ENCODE measurements at regions of chr5 and their contacts with region 1.

Region 1: DNA sequence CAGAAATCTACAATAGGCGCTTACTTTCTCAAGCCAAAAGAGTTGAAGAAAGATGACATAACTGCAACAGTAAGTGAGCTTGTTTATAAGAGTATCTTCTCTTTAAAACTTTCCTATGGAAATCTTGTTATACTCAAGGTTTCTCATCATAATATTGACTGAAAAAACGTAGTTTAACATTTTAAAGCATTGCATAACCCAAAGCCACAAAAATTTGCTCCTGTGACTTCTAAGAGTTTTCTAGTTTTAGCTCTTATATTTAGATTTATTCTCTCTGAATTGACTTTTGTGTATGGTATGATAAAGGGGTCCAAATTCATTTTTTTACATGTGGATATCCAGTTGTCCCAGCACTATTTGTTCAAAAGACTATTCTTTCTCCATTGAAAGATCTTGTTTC is 15.2 kb downstream of the WDR36 start:
- DNase-seq: no peak
- ATAC-seq: no peak
- H3K4me3 ChIP-seq: no peak overlapping the region
- H3K27ac ChIP-seq: no peak overlapping the region
- H3K4me1 ChIP-seq: no peaks in the 10 kb centered on the region
- H3K27me3 ChIP-seq: no peaks in the 10 kb centered on the region
- CTCF ChIP-seq: no peak

Region 2: GRCh38 chr5:109830955-109831502 is 1276.3 kb before region 1 on chr5:
- intact Hi-C with region 1: loop called in 1 of 2 experiments (anchors 10 kb)
- DNase-seq: no peak
- ATAC-seq: no peak
- H3K4me3 ChIP-seq: no peak overlapping the region
- H3K27ac ChIP-seq: no peak overlapping the region
- H3K4me1 ChIP-seq: no peaks in the 10 kb centered on the region
- H3K27me3 ChIP-seq: no peaks in the 10 kb centered on the region
- CTCF ChIP-seq: no peak

Region 3: GRCh38 chr5:111278845-111279504 is 171.6 kb after region 1 on chr5:
- intact Hi-C with region 1: no loop called
- DNase-seq: peak; percentile 18 to 60
- ATAC-seq: no peak
- H3K4me3 ChIP-seq: no peak overlapping the region
- H3K27ac ChIP-seq: no peak overlapping the region
- H3K4me1 ChIP-seq: no peaks in the 10 kb centered on the region
- H3K27me3 ChIP-seq: peaks cover 0 to 2% (median 0%) of the 10 kb centered on the region in 3 donors
- CTCF ChIP-seq: peak; percentile 46